ENCODE measurements at regions of chr11 and their contacts with region 1.

Region 1: DNA sequence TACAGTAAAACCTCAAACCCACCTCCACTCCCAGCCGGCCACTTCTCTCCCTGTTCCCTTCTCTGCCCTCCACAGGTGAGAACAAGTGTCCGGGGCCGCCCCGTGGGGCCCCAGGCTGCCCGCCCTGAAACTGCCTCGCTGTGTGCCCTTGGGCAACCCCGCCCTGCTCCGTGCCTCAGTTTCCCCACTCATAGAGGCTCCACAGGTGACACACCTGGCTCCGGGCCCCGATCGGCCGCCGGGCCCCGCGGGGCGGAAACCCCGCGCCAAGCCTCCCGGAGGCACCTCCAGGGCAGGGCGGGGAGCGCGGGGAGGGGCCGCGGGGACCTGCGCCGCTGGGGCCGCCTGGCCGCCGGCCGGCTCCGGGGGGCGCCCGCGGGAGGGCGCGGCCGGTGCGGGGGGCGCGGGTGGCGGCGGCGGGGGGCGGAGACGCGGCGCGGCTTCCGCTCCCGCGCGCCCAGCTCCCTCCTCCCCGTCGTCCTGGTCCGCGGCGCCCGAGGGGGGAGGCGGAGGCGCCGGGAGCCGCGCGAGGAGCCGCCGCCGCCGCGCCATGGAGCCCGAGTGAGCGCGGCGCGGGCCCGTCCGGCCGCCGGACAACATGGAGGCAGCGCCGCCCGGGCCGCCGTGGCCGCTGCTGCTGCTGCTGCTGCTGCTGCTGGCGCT is at the start of gene LRP5:
- DNase-seq: peak; percentile 61
- H3K4me3 ChIP-seq: peak within 1 kb of the TSS; percentile 75
- H3K27ac ChIP-seq: peak within 1 kb of the TSS; percentile 84
- H3K4me1 ChIP-seq: peaks cover 17% of the 10 kb centered on the region
- H3K27me3 ChIP-seq: no peaks in the 10 kb centered on the region
- CTCF ChIP-seq: no peak
- total RNA-seq, gene LRP5: 67.0 and 76.3 TPM in 2 replicates

Region 2: GRCh38 chr11:68293708-68294107 is 18.5 kb before region 1 on chr11:
- CTCF ChIA-PET with region 1: no interaction called
- POLR2A ChIA-PET with region 1: no interaction called
- intact Hi-C with region 1: no loop called
- DNase-seq: no peak
- H3K4me3 ChIP-seq: no peak overlapping the region
- H3K27ac ChIP-seq: no peak overlapping the region
- H3K4me1 ChIP-seq: no peaks in the 10 kb centered on the region
- H3K27me3 ChIP-seq: no peaks in the 10 kb centered on the region
- CTCF ChIP-seq: no peak

Region 3: DNA sequence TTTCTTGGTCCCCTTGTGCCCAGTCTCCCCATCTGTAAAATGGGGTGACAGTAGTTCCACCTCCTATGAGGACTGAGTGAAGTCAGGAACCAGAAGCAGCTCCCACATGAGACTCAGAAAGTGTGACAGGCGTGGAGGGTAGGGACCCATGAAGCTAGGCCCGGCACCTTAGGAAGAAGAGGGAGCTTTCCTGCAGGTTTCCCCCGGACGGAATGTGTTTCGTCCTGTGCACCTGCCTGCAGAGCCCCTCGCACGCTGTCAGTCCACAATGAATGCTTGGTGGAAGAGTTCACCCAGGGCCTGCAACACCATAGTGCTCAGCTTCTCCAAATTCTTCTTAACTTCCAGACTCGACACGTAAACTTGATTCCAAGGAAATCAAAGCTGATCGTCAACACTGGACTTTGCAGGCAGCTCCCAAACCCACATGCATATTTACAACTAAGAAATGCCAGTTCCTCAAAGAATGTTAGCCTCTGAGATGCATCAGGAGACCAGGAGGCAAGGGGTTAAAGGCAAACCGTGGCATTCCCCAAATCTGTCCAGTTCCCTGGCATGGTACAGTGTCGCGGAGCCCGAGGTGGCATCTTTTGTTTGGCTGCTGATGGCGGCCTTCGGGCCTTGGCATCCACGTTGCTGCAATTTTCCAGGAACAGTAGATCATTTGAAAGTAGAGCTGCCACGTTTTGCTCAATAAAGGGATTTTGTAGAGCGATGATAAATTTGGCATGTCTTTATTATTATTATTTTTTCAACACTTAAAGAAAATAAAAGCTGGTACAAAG is 15.5 kb after region 1 on chr11:
- CTCF ChIA-PET with region 1: interaction called, 11 read pairs
- POLR2A ChIA-PET with region 1: no interaction called
- intact Hi-C with region 1: no loop called
- DNase-seq: no peak
- H3K4me3 ChIP-seq: no peak overlapping the region
- H3K27ac ChIP-seq: peak overlapping the region; percentile 20
- H3K4me1 ChIP-seq: peaks cover 35% of the 10 kb centered on the region
- H3K27me3 ChIP-seq: no peaks in the 10 kb centered on the region
- CTCF ChIP-seq: no peak

Measured in A673 (cell line).